PC-9 (cell line): ENCODE measurements at regions of chr2 and their contacts with region 1.

Region 1: DNA sequence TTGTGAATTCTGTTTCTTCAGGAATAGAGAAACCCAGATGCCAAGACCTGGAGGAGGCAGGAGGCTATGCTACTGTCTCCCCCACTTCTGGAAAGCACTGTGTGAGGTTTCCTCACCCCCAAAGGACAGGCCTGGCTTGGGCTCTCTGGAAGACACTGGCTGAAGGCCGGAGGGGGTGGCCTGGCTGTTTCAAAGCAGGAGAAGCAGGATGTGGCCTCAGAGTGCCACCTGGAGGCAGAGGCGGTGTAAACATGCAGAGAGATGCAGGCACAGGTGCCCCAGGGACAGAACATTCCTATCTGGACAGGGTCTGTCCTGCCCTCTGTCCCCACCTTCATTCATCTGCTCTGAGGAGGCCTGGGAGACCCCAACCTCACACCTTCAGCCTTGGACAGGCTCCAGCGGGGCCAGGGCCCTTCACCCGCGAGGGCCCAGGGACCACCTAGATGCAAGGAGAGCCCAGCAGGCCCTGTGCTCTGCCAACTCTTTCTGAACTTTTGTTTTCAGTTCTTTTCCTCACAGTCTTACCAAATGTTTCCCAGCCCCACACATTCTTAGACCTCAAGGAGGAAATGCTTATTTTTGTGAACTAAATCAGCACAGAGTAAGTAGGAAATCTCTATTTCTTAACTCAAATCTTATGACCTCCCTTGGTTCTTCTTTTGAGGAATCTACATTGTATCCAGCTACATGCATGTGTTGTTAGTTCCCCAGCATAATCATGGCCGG is 79.2 kb downstream of the LONRF2 start:
- DNase-seq: peak in 1 of 2 experiments; percentile 39
- H3K4me3 ChIP-seq: no peak overlapping the region
- H3K27ac ChIP-seq: no peak overlapping the region
- H3K4me1 ChIP-seq: no peaks in the 10 kb centered on the region
- H3K27me3 ChIP-seq: peaks cover 95% of the 10 kb centered on the region
- CTCF ChIP-seq: peak; percentile 80

Region 2: GRCh38 chr2:99085421-99085820 is 1157.6 kb before region 1 on chr2:
- CTCF ChIA-PET with region 1: no interaction called
- POLR2A ChIA-PET with region 1: no interaction called
- intact Hi-C with region 1: loop called (anchors 10 kb)
- DNase-seq: no peak
- H3K4me3 ChIP-seq: no peak overlapping the region
- H3K27ac ChIP-seq: no peak overlapping the region
- H3K4me1 ChIP-seq: no peaks in the 10 kb centered on the region
- H3K27me3 ChIP-seq: no peaks in the 10 kb centered on the region
- CTCF ChIP-seq: peak; percentile 72

Region 3: GRCh38 chr2:99819766-99820165 is 423.3 kb before region 1 on chr2:
- CTCF ChIA-PET with region 1: no interaction called
- POLR2A ChIA-PET with region 1: no interaction called
- intact Hi-C with region 1: loop called (anchors 5 kb)
- DNase-seq: no peak
- H3K4me3 ChIP-seq: no peak overlapping the region
- H3K27ac ChIP-seq: no peak overlapping the region
- H3K4me1 ChIP-seq: no peaks in the 10 kb centered on the region
- H3K27me3 ChIP-seq: peaks cover 68% of the 10 kb centered on the region
- CTCF ChIP-seq: no peak

Region 4: DNA sequence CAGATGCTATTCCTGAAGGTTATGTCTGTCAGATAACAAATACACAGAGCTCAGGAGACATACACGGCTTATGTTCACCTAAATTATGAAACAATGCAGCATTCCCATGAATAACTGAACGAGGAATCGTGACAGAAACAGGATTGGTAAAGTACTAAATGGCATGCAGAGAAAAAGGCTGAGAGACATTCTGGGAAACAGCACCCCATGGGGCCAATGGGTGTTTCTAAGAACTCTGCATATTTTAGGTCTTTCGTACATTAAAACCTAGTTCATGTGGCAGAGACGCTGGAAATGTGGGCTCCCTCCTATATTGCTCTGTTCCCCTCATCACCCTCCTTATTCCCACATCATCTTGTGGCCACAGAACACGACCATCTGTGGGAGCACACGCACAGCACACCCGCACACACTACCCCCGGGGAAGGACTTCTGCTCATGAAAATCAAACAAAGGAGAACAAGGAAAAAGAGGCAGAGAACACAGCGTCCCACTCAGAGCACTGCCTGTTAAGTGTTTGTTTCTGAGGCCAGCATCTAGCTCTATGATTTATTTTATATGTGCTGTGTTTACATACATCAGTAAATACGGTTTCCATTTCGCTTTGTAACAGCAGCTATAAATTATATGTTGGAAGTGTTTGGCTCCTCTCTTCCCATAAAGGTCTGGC is 244.3 kb before region 1 on chr2:
- CTCF ChIA-PET with region 1: no interaction called
- POLR2A ChIA-PET with region 1: no interaction called
- intact Hi-C with region 1: no loop called
- DNase-seq: no peak
- H3K4me3 ChIP-seq: no peak overlapping the region
- H3K27ac ChIP-seq: no peak overlapping the region
- H3K4me1 ChIP-seq: no peaks in the 10 kb centered on the region
- H3K27me3 ChIP-seq: peaks cover 75% of the 10 kb centered on the region
- CTCF ChIP-seq: no peak

Region 5: GRCh38 chr2:100653449-100654035 is 410.5 kb after region 1 on chr2:
- CTCF ChIA-PET with region 1: no interaction called
- POLR2A ChIA-PET with region 1: no interaction called
- intact Hi-C with region 1: no loop called
- DNase-seq: no peak
- H3K4me3 ChIP-seq: no peak overlapping the region
- H3K27ac ChIP-seq: no peak overlapping the region
- H3K4me1 ChIP-seq: peaks cover 13% of the 10 kb centered on the region; the same call in 1 of the 2 replicates
- H3K27me3 ChIP-seq: no peaks in the 10 kb centered on the region
- CTCF ChIP-seq: no peak